Right ventricle myocardium superior (tissue), 1 donor: ENCODE measurements at regions of chr14 and their contacts with region 1.

Region 1: GRCh38 chr14:68979021-68979782 is at the start of gene ACTN1:
- DNase-seq: peak; percentile 96
- ATAC-seq: peak; percentile 87
- total RNA-seq, gene ACTN1: 92.5 TPM

Region 2: DNA sequence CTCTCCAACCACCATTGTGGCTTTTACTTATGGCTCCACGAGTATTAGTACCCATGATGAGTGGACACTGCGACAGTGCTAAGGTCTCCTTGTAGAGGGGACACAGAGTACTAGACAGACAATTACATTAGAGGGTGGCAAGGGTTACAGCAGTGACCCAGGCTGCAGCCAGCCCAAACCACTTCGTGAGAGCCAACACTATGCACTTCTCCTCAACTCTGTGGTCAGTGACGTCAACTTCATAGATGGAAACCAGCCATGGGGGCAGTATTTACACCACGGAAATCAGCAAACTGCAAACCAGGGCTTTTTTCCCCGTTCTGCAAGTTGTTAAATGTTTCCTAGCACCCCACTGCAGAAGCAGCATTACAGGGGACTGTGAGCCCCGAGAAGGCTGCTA is 124.8 kb before region 1 on chr14:
- intact Hi-C with region 1: no loop called
- DNase-seq: no peak
- ATAC-seq: no peak

Region 3: DNA sequence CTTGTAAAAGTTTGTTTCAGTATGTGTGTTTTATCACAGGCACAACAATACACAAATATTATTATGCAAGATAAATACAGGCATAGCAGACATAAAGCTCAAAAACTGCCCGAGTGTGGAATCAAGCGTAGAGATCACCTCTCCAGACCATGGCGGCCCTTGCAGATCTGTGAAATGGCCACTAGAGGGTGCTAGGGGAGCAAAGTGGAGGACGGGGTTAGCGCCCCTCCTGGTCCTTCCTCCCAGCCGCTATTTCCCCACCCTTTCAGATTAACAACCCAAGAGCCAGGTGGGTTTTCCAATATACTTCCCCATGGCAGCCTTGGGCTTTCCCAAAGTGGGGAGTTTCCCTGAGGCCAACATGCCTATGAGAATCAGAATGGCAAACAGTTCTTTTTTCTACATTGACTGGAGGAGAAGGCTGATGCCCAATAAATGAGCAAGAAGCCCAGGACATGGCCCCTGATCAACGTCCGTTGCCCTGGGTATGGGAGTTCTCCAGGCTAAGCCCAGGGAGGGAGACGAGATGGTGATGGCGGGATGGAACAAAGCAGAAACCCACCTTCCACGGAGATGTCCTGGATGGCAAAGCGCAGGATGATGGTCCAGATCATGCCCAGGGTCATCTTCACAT is 67.5 kb before region 1 on chr14:
- intact Hi-C with region 1: loop called (anchors 2 kb)
- DNase-seq: peak; percentile 77
- ATAC-seq: peak; percentile 93

Region 4: GRCh38 chr14:68924186-68925158 is 54.7 kb before region 1 on chr14:
- intact Hi-C with region 1: loop called (anchors 5 kb)
- DNase-seq: no peak
- ATAC-seq: peak; percentile 73

Region 5: DNA sequence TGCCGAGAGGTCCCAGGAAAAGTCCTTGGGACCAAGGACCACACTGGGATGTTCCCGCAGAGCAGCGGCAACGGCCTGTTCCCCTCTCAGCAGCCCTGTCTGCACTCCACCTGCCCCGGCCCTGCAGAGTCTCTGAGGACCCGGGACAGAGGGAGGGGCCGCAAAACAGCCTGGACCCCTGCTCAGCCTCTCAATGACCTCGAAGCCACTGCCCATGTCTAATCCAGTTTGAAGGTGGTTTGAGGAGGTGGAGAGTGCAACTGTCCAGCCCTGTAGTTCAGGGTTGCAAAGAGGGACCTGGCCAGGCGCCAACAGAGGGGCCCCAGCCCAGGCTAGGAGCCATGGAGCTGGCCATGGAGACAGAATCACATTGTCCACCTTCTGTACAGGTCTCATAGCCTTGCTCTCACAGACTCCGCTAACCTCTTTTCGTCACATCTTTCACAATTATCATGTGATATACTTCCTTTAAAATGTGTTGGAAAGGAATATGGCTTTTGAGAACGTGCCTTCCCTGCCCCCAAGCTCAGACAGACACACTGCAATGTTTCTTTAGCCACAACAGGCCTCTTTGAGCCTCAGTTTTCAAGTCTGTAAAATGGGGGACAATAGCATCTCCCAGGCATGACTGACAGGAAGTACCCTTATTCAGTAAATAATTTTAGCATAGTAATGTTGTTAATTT is 49.4 kb before region 1 on chr14:
- intact Hi-C with region 1: loop called (anchors 5 kb)
- DNase-seq: no peak
- ATAC-seq: no peak

Region 6: GRCh38 chr14:68939893-68940613 is 39.1 kb before region 1 on chr14:
- intact Hi-C with region 1: loop called (anchors 5 kb)
- DNase-seq: peak; percentile 86
- ATAC-seq: peak; percentile 63